Panc1 (cell line): ENCODE measurements at regions of chr1 and their contacts with region 1.

Region 1: DNA sequence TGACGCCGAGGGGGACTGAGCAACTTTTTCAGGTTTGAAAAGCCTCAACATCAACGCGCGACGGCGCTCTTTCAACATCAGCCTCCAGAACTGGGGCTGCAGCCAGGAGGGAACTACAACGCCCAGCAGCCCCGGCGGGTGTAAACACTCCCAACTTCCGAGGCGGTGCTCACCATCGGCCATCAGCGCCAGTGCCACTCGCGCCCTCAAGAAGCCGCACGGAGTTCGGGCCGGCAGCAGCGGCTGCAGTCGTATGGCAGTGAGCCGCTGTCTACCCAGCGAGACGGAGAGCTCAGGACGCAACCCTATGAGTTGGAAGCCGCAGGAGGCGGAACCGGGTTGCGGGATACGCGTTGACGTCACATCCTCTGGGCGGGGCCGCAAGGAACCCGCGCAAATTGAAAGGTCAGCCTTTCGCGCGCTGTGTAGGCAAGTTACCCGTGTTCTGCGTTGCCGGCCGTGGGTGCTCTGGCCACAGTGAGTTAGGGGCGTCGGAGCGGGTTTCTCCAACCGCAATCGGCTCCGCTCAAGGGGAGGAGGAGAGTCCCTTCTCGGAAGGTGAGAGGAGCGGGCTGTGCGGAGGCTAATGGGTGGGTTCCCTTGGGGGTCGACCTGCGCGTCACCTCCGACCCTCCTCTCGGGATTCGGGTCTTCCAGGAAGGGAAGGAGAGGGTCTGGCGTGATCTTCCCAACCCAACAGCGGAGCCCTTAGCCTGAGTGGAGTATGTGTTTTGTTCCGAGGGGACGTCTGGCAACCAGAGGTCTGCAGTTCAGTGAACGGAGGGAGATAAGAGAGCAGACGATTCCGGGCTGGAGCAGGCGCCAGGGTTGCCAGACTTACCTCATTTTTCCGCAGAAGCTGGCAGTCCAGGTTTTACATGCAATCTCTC is at the start of gene EXO1:
- DNase-seq: peak; percentile 79
- ATAC-seq: peak; percentile 98
- H3K4me3 ChIP-seq: peak within 1 kb of the TSS; percentile 94 to 98
- H3K27ac ChIP-seq: peak within 1 kb of the TSS; percentile 95
- H3K4me1 ChIP-seq: peaks cover 18% of the 10 kb centered on the region
- H3K27me3 ChIP-seq: no peaks in the 10 kb centered on the region
- CTCF ChIP-seq: peak; percentile 75
- total RNA-seq, gene EXO1: 26.3 TPM

Region 2: GRCh38 chr1:241870290-241870689 is 22.2 kb after region 1 on chr1:
- CTCF ChIA-PET with region 1: no interaction called
- POLR2A ChIA-PET with region 1: no interaction called
- in situ Hi-C with region 1: no loop called
- intact Hi-C with region 1: loop called (anchors 1 kb)
- DNase-seq: no peak
- ATAC-seq: no peak
- H3K4me3 ChIP-seq: no peak overlapping the region
- H3K27ac ChIP-seq: no peak overlapping the region
- H3K4me1 ChIP-seq: no peaks in the 10 kb centered on the region
- H3K27me3 ChIP-seq: no peaks in the 10 kb centered on the region
- CTCF ChIP-seq: no peak